Left colon (tissue), 2 donors: ENCODE measurements at regions of chr2 and their contacts with region 1.

Region 1: GRCh38 chr2:231612179-231613053 is 19.8 kb downstream of the TEX44 start:
- DNase-seq: peak; percentile 93 to 94
- ATAC-seq: peak; percentile 61

Region 2: GRCh38 chr2:231666171-231667095 is 54.0 kb after region 1 on chr2:
- intact Hi-C with region 1: loop called in 1 of 2 experiments (anchors 2 kb)
- DNase-seq: peak; percentile 94 to 99
- ATAC-seq: peak; percentile 72

Region 3: DNA sequence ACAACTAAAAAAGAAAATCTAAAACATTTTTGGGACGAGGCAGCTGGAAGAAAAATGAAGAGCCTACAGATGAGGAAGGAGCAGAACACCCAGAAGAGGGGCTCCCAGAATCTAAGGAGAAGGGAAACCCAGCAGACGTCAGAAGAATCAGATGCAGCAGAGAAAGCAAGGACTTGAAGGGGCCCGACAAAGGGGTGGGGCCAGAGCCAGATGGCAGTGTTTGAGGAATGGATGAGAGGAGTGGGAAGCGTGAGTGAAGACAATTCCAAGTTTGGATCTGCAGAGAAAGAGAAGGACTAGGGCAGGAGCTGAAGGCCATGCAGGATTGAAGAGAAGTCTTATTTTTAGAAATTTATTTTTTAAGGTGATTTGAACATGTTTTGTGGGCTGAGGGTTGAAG is 115.2 kb after region 1 on chr2:
- intact Hi-C with region 1: no loop called
- DNase-seq: no peak
- ATAC-seq: no peak